ENCODE measurements at regions of chr7 and their contacts with region 1.

Region 1: GRCh38 chr7:99312316-99313203 is 13.1 kb upstream of the ARPC1A start:
- DNase-seq: peak in 1 of 2 experiments; percentile 91
- H3K4me3 ChIP-seq: no peak overlapping the region
- H3K27ac ChIP-seq: no peak overlapping the region
- H3K4me1 ChIP-seq: no peaks in the 10 kb centered on the region
- H3K27me3 ChIP-seq: no peaks in the 10 kb centered on the region
- CTCF ChIP-seq: peak; percentile 66 to 88 (median 82)
- EP300 ChIP-seq: no peak
- POLR2A ChIP-seq: no peak
- RAD21 ChIP-seq: peak; percentile 88 to 89

Region 2: GRCh38 chr7:99090771-99091542 is 221.6 kb before region 1 on chr7:
- CTCF ChIA-PET with region 1: no interaction called
- POLR2A ChIA-PET with region 1: no interaction called
- DNase-seq: no peak
- H3K4me3 ChIP-seq: no peak overlapping the region
- H3K27ac ChIP-seq: no peak overlapping the region
- H3K4me1 ChIP-seq: peaks cover 0 to 4% (median 0%) of the 10 kb centered on the region in 4 experiments; a peak in 2 of 7 replicates
- H3K27me3 ChIP-seq: no peaks in the 10 kb centered on the region
- CTCF ChIP-seq: no peak
- EP300 ChIP-seq: no peak
- POLR2A ChIP-seq: no peak
- RAD21 ChIP-seq: no peak

Region 3: DNA sequence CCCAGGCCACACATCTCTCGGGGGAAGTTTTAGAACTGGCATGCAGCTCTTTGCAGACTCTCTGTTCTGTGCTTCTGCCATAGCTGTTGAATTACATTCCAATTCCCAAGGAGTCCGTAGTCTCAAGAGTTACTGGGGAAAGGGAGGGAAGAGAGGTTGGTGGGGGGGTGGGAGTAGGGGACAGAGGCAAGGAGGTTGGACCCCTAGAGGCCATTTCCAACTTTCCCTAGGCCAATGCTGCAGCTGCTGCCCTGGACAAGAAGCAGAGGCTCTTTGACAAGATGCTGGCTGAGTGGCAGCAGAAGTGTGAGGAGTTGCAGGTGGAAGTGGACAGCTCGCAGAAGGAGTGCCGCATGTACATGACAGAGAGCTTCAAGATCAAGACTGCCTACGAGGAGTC is 16.1 kb before region 1 on chr7:
- CTCF ChIA-PET with region 1: interaction called, 13 read pairs
- POLR2A ChIA-PET with region 1: no interaction called
- DNase-seq: no peak
- H3K4me3 ChIP-seq: no peak overlapping the region
- H3K27ac ChIP-seq: no peak overlapping the region
- H3K4me1 ChIP-seq: no peaks in the 10 kb centered on the region; a peak in 1 of 7 replicates
- H3K27me3 ChIP-seq: no peaks in the 10 kb centered on the region
- CTCF ChIP-seq: peak in 2 of 3 experiments; percentile 16 to 44; a peak in 2 of 4 replicates
- EP300 ChIP-seq: no peak
- POLR2A ChIP-seq: no peak
- RAD21 ChIP-seq: peak in 1 of 2 experiments; percentile 10; a peak in 1 of 4 replicates

Region 4: GRCh38 chr7:99325545-99326407 is 13.2 kb after region 1 on chr7 and contains the start of gene ARPC1A:
- CTCF ChIA-PET with region 1: interaction called, 50 read pairs
- POLR2A ChIA-PET with region 1: interaction called, 3 read pairs
- DNase-seq: peak; percentile 90 to 96
- H3K4me3 ChIP-seq: peak within 1 kb of the TSS; percentile 70 to 99 (median 94)
- H3K27ac ChIP-seq: peak within 1 kb of the TSS; percentile 74
- H3K4me1 ChIP-seq: no peaks in the 10 kb centered on the region; a peak in 2 of 7 replicates
- H3K27me3 ChIP-seq: no peaks in the 10 kb centered on the region
- CTCF ChIP-seq: peak; percentile 0 to 25 (median 23); a peak in 2 of 4 replicates
- EP300 ChIP-seq: no peak
- POLR2A ChIP-seq: peak; percentile 92 to 93
- RAD21 ChIP-seq: no peak
- total RNA-seq, gene ARPC1A: 147 and 155 TPM in 2 replicates

Region 5: GRCh38 chr7:99409192-99409572 is 96.6 kb after region 1 on chr7:
- CTCF ChIA-PET with region 1: no interaction called
- POLR2A ChIA-PET with region 1: no interaction called
- DNase-seq: no peak
- H3K4me3 ChIP-seq: peak overlapping the region; percentile 93 to 99 (median 97)
- H3K27ac ChIP-seq: peak overlapping the region; percentile 100
- H3K4me1 ChIP-seq: peaks cover 0 to 5% (median 3%) of the 10 kb centered on the region in 4 experiments; a peak in 2 of 7 replicates
- H3K27me3 ChIP-seq: no peaks in the 10 kb centered on the region
- CTCF ChIP-seq: no peak
- EP300 ChIP-seq: no peak
- POLR2A ChIP-seq: no peak; a peak in 1 of 3 replicates
- RAD21 ChIP-seq: no peak

Region 6: DNA sequence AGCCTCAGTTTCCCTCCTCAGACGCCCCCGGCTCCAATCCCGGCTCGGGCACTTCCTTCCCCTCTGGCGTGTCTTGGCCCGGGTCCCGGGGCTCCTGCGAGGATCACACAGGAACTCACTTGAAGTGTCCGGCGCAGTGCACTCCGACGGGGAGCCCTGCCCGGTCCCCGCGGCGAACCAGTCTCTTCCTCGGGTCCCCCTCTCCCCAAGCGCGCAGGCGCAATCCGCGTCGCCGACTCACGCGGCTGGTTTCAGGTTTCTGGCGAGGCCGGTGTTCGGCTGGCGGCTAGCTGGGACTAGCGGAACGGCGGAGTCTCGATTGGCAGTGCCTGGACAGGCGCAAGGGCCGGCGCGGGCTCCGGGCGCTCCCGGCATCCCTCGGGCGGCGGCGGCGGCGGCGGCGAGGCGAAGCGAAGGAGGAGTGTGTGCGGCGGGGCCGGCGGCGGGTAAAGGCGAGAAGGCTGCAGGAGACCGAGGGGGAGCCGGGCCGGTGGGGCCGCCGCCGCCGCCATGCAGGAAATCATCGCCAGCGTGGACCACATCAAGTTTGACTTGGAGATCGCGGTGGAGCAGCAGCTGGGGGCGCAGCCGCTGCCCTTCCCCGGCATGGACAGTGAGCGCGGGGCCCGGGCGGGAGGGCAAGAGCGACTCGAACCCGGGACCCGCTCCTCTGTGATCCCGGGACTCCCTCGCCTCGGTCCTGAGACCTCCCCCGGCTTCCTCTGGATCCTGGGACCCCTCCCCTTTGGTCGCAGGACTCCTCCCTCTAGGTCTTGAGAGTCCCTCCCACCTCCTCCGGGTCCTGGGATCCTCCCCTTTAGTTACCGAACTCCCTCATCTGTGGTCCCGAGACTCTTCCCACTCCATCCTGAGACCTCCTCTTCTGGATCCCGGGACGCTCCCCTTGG is 126.3 kb after region 1 on chr7 and contains the starts of genes CPSF4 and PTCD1:
- CTCF ChIA-PET with region 1: no interaction called
- POLR2A ChIA-PET with region 1: no interaction called
- DNase-seq: peak; percentile 84 to 96
- H3K4me3 ChIP-seq: peak within 1 kb of the TSS; percentile 87 to 95 (median 88)
- H3K27ac ChIP-seq: peak within 1 kb of the TSS; percentile 93
- H3K4me1 ChIP-seq: peaks cover 0 to 12% (median 6%) of the 10 kb centered on the region in 4 experiments; a peak in 5 of 7 replicates
- H3K27me3 ChIP-seq: no peaks in the 10 kb centered on the region
- CTCF ChIP-seq: no peak
- EP300 ChIP-seq: peak in 1 of 2 experiments; percentile 49; a peak in 1 of 3 replicates
- POLR2A ChIP-seq: peak in 1 of 2 experiments; percentile 83; a peak in 2 of 3 replicates
- RAD21 ChIP-seq: no peak
- total RNA-seq, gene CPSF4: 74.8 and 77.5 TPM in 2 replicates
- total RNA-seq, gene PTCD1: 7.5 and 8.5 TPM in 2 replicates